Activated T-helper 1 cell treated with anti-CD3 and anti-CD28 coated beads, Interleukin-12 subunit alpha, Interleukin-12 subunit beta, Interleukin-2, Interleukin-4 antibody, amounts not matched to agents 30 ng/mL and 10 ng/mL and 1 ng/mL, durations not matched to agents 14 hours and 24 hours and 36 hours (primary cell): ENCODE measurements at regions of chr10 and their contacts with region 1.

Region 1: DNA sequence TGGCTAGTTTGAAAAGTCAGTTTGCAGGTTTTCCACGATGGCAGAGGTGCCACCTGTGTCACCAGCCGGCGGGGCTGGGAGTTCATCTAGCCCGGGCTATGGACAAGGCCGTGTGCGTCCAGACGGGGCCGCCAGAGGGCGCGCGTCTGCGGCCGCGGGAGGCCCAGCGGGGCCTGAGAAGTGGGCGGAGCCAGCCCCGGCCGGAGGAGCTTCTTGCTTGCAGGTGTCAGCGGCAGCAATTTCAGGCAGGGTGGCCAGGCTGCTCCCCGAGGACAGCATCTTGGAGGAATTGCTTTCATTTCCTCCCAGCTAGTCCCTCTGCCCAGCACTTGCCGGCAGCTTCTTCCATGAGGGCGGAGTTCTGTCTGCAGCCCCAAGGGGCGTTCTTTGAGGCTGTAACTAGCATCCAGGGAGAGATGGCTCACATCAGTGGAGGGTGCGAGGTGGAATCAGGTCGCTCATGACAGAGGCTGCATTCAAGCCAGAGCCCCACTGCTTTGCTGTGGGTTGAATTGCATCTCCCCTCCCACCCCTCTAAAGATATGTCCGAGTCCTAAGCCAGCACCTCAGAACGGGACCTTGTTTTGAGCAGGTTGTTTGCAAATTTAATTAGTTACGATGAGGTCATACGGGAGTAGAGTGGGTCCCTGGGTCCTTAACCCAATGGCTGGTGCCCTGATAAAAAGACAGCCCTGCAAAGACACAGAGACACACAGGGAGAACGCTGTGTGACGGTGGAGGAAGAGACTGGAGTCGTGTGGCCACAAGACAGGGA is 85.9 kb upstream of the MKI67 start:
- DNase-seq: peak; percentile 83
- H3K4me3 Mint-ChIP-seq: peak overlapping the region; percentile 86
- H3K27ac Mint-ChIP-seq: peak overlapping the region; percentile 89
- H3K4me1 Mint-ChIP-seq: peaks cover 11% of the 10 kb centered on the region
- H3K27me3 Mint-ChIP-seq: peaks cover 13% of the 10 kb centered on the region

Region 2: DNA sequence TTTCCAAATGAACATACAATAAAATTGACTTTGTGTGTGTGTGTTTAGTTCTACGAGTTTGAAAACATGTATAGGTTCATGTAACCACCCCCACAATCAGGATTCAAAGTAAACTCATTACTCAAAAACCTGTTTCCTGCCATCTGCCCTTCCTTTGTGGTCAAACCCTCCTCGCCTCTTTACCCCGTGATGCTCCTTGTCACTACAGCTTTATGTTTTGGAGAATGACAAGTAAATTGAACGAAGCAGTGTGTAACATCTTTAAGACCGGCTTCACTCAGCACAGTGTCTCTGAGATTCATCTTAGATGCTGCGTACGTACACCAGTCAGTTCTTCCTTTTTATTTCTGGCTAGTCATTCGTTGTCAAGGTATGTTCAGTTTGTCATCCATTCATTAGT is 31.3 kb before region 1 on chr10:
- intact Hi-C with region 1: loop called (anchors 1 kb)
- DNase-seq: peak; percentile 68
- H3K4me3 Mint-ChIP-seq: peak overlapping the region; percentile 68
- H3K27ac Mint-ChIP-seq: peak overlapping the region; percentile 82
- H3K4me1 Mint-ChIP-seq: peaks cover 62% of the 10 kb centered on the region
- H3K27me3 Mint-ChIP-seq: no peaks in the 10 kb centered on the region

Region 3: GRCh38 chr10:128187788-128188185 is 24.4 kb before region 1 on chr10:
- intact Hi-C with region 1: loop called (anchors 1 kb)
- DNase-seq: no peak
- H3K4me3 Mint-ChIP-seq: peak overlapping the region; percentile 79
- H3K27ac Mint-ChIP-seq: peak overlapping the region; percentile 69
- H3K4me1 Mint-ChIP-seq: peaks cover 63% of the 10 kb centered on the region
- H3K27me3 Mint-ChIP-seq: peaks cover 5% of the 10 kb centered on the region